H1 (cell line): ENCODE measurements at regions of chr7 and their contacts with region 1.

Region 1: GRCh38 chr7:85030893-85031292 is 156.0 kb downstream of the SEMA3D start:
- DNase-seq: no peak
- H3K4me3 ChIP-seq: no peak overlapping the region
- H3K27ac ChIP-seq: no peak overlapping the region
- H3K4me1 ChIP-seq: no peaks in the 10 kb centered on the region
- H3K27me3 ChIP-seq: no peaks in the 10 kb centered on the region
- CTCF ChIP-seq: peak in 1 of 3 experiments; percentile 38; a peak in 2 of 4 replicates
- EP300 ChIP-seq: no peak
- POLR2A ChIP-seq: no peak
- RAD21 ChIP-seq: peak; percentile 54 to 57

Region 2: DNA sequence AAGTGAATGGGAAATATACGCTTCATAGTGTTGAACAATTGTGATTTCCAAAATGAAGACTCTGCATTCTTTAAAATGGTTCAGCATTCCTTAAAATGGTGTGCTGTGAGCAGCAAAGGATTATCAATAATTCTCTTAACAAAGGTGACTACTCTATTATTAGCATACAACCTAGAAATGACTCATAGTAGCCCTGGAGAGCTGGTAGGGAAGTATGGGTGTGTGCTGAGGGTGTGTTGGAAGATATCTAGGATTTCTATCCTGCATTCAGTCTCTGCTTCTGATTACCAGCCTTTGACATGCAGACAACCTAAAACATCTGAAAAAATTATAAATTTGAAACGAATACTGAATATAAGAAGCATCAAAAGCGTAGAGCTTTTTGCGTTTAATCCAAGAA is 83.4 kb after region 1 on chr7:
- CTCF ChIA-PET with region 1: no interaction called
- POLR2A ChIA-PET with region 1: no interaction called
- DNase-seq: no peak
- H3K4me3 ChIP-seq: no peak overlapping the region
- H3K27ac ChIP-seq: no peak overlapping the region
- H3K4me1 ChIP-seq: no peaks in the 10 kb centered on the region
- H3K27me3 ChIP-seq: no peaks in the 10 kb centered on the region
- CTCF ChIP-seq: no peak
- EP300 ChIP-seq: no peak
- POLR2A ChIP-seq: no peak
- RAD21 ChIP-seq: no peak

Region 3: GRCh38 chr7:85274454-85274853 is 243.6 kb after region 1 on chr7:
- CTCF ChIA-PET with region 1: no interaction called
- POLR2A ChIA-PET with region 1: no interaction called
- DNase-seq: no peak
- H3K4me3 ChIP-seq: no peak overlapping the region; a peak in 1 of 8 replicates
- H3K27ac ChIP-seq: no peak overlapping the region; the same call in 1 of the 2 replicates
- H3K4me1 ChIP-seq: peaks cover 0 to 16% (median 5%) of the 10 kb centered on the region in 4 experiments; a peak in 4 of 7 replicates
- H3K27me3 ChIP-seq: no peaks in the 10 kb centered on the region
- CTCF ChIP-seq: no peak
- EP300 ChIP-seq: no peak
- POLR2A ChIP-seq: no peak
- RAD21 ChIP-seq: no peak

Region 4: GRCh38 chr7:85829817-85830432 is 799.0 kb after region 1 on chr7:
- CTCF ChIA-PET with region 1: interaction called, 14 read pairs
- POLR2A ChIA-PET with region 1: no interaction called
- DNase-seq: no peak
- H3K4me3 ChIP-seq: no peak overlapping the region
- H3K27ac ChIP-seq: no peak overlapping the region
- H3K4me1 ChIP-seq: no peaks in the 10 kb centered on the region
- H3K27me3 ChIP-seq: no peaks in the 10 kb centered on the region
- CTCF ChIP-seq: no peak; a peak in 1 of 4 replicates
- EP300 ChIP-seq: no peak
- POLR2A ChIP-seq: no peak
- RAD21 ChIP-seq: peak in 1 of 2 experiments; percentile 59; a peak in 3 of 4 replicates